Endothelial cell of umbilical vein (primary cell): ENCODE measurements at regions of chr2 and their contacts with region 1.

Region 1: DNA sequence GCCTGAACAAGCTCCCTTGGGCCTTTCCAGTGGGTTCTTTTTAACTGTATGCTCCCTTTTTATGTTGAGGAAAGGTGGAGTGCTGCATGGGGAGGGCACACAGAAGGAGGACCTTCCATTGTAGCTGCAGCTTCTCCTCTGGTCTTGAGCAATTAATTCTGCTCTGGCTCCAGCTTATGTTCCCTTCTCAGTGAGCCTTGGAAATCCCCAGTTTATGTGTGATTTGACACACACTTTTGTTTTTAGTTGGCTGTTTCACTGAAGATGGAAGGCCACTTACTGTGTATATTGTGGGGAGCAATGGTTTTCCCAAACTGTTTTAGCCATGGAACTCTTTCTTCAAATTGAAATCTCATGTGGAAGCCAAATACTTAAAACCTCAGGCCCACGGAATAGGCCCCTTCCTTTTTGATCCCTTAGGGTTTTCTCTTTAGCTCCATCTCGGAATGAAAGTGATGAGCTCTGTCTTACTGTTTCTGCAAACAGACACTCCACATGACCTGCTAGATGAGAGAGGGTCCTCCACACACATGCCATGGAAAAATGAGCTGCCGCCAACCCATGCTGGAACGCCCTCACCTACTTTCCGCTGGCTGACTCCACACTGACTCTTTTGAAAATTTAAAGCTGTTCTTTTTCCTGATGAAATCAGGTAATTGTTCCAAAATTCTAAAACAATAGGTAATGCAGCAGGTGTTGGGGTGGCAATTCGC is 280.9 kb upstream of the SIX2 start:
- DNase-seq: no peak
- H3K4me3 ChIP-seq: no peak overlapping the region
- H3K27ac ChIP-seq: peak overlapping the region; percentile 3
- H3K4me1 ChIP-seq: peaks cover 54% of the 10 kb centered on the region
- H3K27me3 ChIP-seq: no peaks in the 10 kb centered on the region
- CTCF ChIP-seq: no peak
- POLR2A ChIP-seq: no peak

Region 2: GRCh38 chr2:45275242-45275805 is 14.8 kb before region 1 on chr2:
- CTCF ChIA-PET with region 1: interaction called, 3 read pairs
- POLR2A ChIA-PET with region 1: interaction called, 3 read pairs
- dilution Hi-C with region 1: no loop called
- intact Hi-C with region 1: loop called (anchors 1 kb)
- DNase-seq: peak; percentile 70
- H3K4me3 ChIP-seq: no peak overlapping the region
- H3K27ac ChIP-seq: peak overlapping the region; percentile 34
- H3K4me1 ChIP-seq: peaks cover 38% of the 10 kb centered on the region
- H3K27me3 ChIP-seq: no peaks in the 10 kb centered on the region
- CTCF ChIP-seq: no peak
- POLR2A ChIP-seq: no peak